ENCODE measurements at regions of chr17 and their contacts with region 1.

Region 1: DNA sequence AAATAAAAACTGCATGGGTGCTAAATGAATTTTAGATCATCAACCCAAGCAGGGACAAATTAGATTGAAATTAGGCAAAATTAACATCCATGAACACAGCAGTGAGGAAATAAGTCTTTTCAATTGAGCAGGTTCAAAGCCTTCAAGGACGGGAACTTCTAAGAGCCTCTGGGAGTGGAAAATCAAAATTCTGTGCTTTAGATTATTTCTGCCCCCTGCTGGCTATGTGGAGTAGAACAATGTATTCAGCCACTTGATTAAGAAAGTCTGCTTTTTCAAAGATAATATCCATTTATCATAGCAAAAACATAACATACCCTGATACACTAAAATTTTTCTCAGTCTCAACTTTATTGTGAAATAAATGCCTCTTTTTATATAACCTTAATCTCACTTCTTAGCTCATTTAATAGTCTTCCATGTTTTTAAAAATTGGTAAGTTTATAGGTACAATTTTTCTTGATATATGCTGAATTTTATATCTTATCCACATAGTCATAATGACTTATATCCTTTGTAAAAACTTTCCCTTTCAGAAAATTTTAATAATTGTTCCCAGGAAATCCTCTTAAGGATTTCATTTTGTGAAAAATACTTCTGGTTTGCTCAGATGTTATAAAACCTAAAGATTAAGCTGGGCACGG is 28.1 kb upstream of the NOL11 start:
- DNase-seq: peak; percentile 37
- ATAC-seq: peak; percentile 82
- H3K4me3 ChIP-seq: no peak overlapping the region
- H3K27ac ChIP-seq: peak overlapping the region; percentile 24; the same call in 1 of the 2 replicates
- H3K4me1 ChIP-seq: peaks cover 10% of the 10 kb centered on the region
- H3K27me3 ChIP-seq: no peaks in the 10 kb centered on the region
- CTCF ChIP-seq: peak; percentile 63 to 73 (median 72)
- EP300 ChIP-seq: no peak
- POLR2A ChIP-seq: no peak
- RAD21 ChIP-seq: peak; percentile 85

Region 2: GRCh38 chr17:67559377-67559966 is 130.2 kb before region 1 on chr17:
- CTCF ChIA-PET with region 1: interaction called, 39 read pairs
- POLR2A ChIA-PET with region 1: no interaction called
- RAD21 ChIA-PET with region 1: interaction called, 12 read pairs
- SMC1A ChIA-PET with region 1: interaction called, 20 read pairs
- in situ Hi-C with region 1: no loop called
- intact Hi-C with region 1: loop called (anchors 2 kb)
- DNase-seq: no peak
- ATAC-seq: peak; percentile 90
- H3K4me3 ChIP-seq: no peak overlapping the region
- H3K27ac ChIP-seq: no peak overlapping the region
- H3K4me1 ChIP-seq: peaks cover 5% of the 10 kb centered on the region
- H3K27me3 ChIP-seq: no peaks in the 10 kb centered on the region
- CTCF ChIP-seq: peak; percentile 53 to 66 (median 60)
- EP300 ChIP-seq: no peak
- POLR2A ChIP-seq: no peak
- RAD21 ChIP-seq: peak; percentile 65

Region 3: GRCh38 chr17:67594115-67594880 is 95.4 kb before region 1 on chr17:
- CTCF ChIA-PET with region 1: interaction called, 3 read pairs
- POLR2A ChIA-PET with region 1: no interaction called
- RAD21 ChIA-PET with region 1: no interaction called
- SMC1A ChIA-PET with region 1: interaction called, 14 read pairs
- in situ Hi-C with region 1: no loop called
- intact Hi-C with region 1: no loop called
- DNase-seq: peak; percentile 82
- ATAC-seq: peak; percentile 88
- H3K4me3 ChIP-seq: no peak overlapping the region
- H3K27ac ChIP-seq: peak overlapping the region; percentile 82
- H3K4me1 ChIP-seq: peaks cover 20% of the 10 kb centered on the region
- H3K27me3 ChIP-seq: no peaks in the 10 kb centered on the region
- CTCF ChIP-seq: no peak
- EP300 ChIP-seq: peak; percentile 5 to 6; a peak in 1 of 4 replicates
- POLR2A ChIP-seq: no peak
- RAD21 ChIP-seq: peak; percentile 39; the same call in 1 of the 2 replicates

Region 4: GRCh38 chr17:67629971-67630320 is 59.7 kb before region 1 on chr17:
- CTCF ChIA-PET with region 1: interaction called, 22 read pairs
- POLR2A ChIA-PET with region 1: no interaction called
- RAD21 ChIA-PET with region 1: interaction called, 13 read pairs
- SMC1A ChIA-PET with region 1: interaction called, 14 read pairs
- in situ Hi-C with region 1: no loop called
- intact Hi-C with region 1: loop called (anchors 1 kb)
- DNase-seq: no peak
- ATAC-seq: peak; percentile 72
- H3K4me3 ChIP-seq: no peak overlapping the region
- H3K27ac ChIP-seq: no peak overlapping the region; the same call in 1 of the 2 replicates
- H3K4me1 ChIP-seq: peaks cover 15% of the 10 kb centered on the region
- H3K27me3 ChIP-seq: no peaks in the 10 kb centered on the region
- CTCF ChIP-seq: peak; percentile 47 to 53 (median 52); a peak in 4 of 6 replicates
- EP300 ChIP-seq: no peak
- POLR2A ChIP-seq: no peak
- RAD21 ChIP-seq: peak; percentile 68

Region 5: DNA sequence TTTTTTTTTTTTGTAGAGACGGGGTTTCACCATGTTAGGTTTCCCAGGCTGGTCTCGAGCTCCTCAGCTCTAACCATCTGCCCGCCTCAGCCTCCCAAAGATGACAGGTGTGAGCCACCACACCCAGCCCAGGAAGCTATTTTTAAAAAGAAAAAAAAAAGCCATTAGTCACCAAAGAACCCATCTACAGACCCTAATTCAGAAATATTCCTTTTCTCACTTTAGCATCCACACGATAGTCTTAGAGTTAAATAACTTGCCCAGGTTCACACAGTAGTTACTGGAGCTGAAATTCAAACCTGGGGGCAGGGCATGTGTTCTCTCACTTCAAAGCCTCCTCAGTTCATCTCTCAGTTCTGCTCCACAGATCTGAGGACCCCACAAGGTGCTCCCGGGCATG is 42.2 kb before region 1 on chr17:
- CTCF ChIA-PET with region 1: interaction called, 75 read pairs
- POLR2A ChIA-PET with region 1: interaction called, 19 read pairs
- RAD21 ChIA-PET with region 1: interaction called, 80 read pairs
- SMC1A ChIA-PET with region 1: interaction called, 101 read pairs
- in situ Hi-C with region 1: no loop called
- intact Hi-C with region 1: loop called (anchors 1 kb)
- DNase-seq: peak; percentile 67
- ATAC-seq: peak; percentile 59
- H3K4me3 ChIP-seq: no peak overlapping the region
- H3K27ac ChIP-seq: peak overlapping the region; percentile 92
- H3K4me1 ChIP-seq: peaks cover 60% of the 10 kb centered on the region
- H3K27me3 ChIP-seq: no peaks in the 10 kb centered on the region
- CTCF ChIP-seq: no peak
- EP300 ChIP-seq: peak in 1 of 2 experiments; percentile 78; a peak in 2 of 4 replicates
- POLR2A ChIP-seq: no peak
- RAD21 ChIP-seq: peak; percentile 34; the same call in 1 of the 2 replicates

Region 6: DNA sequence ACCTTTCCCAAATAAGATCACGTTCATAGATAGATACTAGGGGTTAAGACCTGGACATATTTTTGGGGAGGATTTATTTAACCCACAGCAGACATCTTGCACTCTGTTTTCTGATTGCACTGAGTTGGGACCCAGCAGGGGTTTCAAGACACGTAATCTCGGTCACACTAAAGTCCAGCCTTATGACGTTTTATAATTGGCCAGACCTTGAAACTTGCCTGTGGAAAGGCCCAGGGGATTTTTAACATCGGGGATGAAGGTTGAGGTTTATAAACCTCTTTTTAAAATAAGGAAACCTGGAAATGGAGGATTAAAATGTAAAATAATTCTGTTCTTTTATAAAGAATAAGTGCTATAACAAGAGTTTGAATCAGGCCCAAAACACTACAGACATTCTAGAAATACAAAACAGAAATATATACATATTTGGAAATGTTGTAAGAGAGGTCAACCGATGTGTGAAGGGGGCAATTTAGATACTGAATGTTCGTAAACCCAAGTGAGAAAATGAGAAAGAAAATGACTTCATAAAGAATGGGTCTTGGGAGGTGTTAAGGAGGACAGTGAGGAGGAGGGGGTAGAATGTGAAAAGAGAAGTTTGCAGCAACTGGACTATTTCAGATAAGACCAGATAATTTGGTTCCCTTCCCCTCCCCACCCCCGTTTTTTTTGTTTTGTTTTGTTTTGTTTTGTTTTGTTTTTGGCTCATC is 33.0 kb before region 1 on chr17:
- CTCF ChIA-PET with region 1: interaction called, 75 read pairs
- POLR2A ChIA-PET with region 1: no interaction called
- RAD21 ChIA-PET with region 1: interaction called, 80 read pairs
- SMC1A ChIA-PET with region 1: interaction called, 101 read pairs
- in situ Hi-C with region 1: no loop called
- intact Hi-C with region 1: no loop called
- DNase-seq: peak; percentile 51
- ATAC-seq: peak; percentile 86
- H3K4me3 ChIP-seq: no peak overlapping the region
- H3K27ac ChIP-seq: peak overlapping the region; percentile 88
- H3K4me1 ChIP-seq: peaks cover 42% of the 10 kb centered on the region
- H3K27me3 ChIP-seq: no peaks in the 10 kb centered on the region
- CTCF ChIP-seq: no peak
- EP300 ChIP-seq: peak; percentile 42 to 66; a peak in 2 of 4 replicates
- POLR2A ChIP-seq: no peak
- RAD21 ChIP-seq: peak; percentile 5; the same call in 1 of the 2 replicates

Region 7: GRCh38 chr17:67663460-67663859 is 26.2 kb before region 1 on chr17:
- CTCF ChIA-PET with region 1: interaction called, 10 read pairs
- POLR2A ChIA-PET with region 1: no interaction called
- RAD21 ChIA-PET with region 1: no interaction called
- SMC1A ChIA-PET with region 1: interaction called, 38 read pairs
- in situ Hi-C with region 1: no loop called
- intact Hi-C with region 1: no loop called
- DNase-seq: no peak
- ATAC-seq: peak; percentile 49
- H3K4me3 ChIP-seq: no peak overlapping the region
- H3K27ac ChIP-seq: no peak overlapping the region
- H3K4me1 ChIP-seq: peaks cover 4% of the 10 kb centered on the region
- H3K27me3 ChIP-seq: no peaks in the 10 kb centered on the region
- CTCF ChIP-seq: no peak
- EP300 ChIP-seq: no peak
- POLR2A ChIP-seq: no peak
- RAD21 ChIP-seq: peak; percentile 31

Region 8: GRCh38 chr17:67800495-67800928 is 110.9 kb after region 1 on chr17:
- CTCF ChIA-PET with region 1: no interaction called
- POLR2A ChIA-PET with region 1: no interaction called
- RAD21 ChIA-PET with region 1: no interaction called
- SMC1A ChIA-PET with region 1: no interaction called
- in situ Hi-C with region 1: no loop called
- intact Hi-C with region 1: no loop called
- DNase-seq: peak; percentile 59
- ATAC-seq: peak; percentile 96
- H3K4me3 ChIP-seq: no peak overlapping the region
- H3K27ac ChIP-seq: no peak overlapping the region
- H3K4me1 ChIP-seq: no peaks in the 10 kb centered on the region
- H3K27me3 ChIP-seq: no peaks in the 10 kb centered on the region
- CTCF ChIP-seq: peak; percentile 83 to 91 (median 84); a peak in 5 of 6 replicates
- EP300 ChIP-seq: no peak
- POLR2A ChIP-seq: no peak
- RAD21 ChIP-seq: peak; percentile 97